ENCODE measurements at regions of chr1 and their contacts with region 1.

Region 1: GRCh38 chr1:220294846-220295301 is 22.6 kb upstream of the RAB3GAP2 start:
- DNase-seq: no peak
- ATAC-seq: no peak
- H3K4me3 ChIP-seq: no peak overlapping the region
- H3K4me3 Mint-ChIP-seq: no peak overlapping the region
- H3K27ac ChIP-seq: no peak overlapping the region
- H3K27ac Mint-ChIP-seq: no peak overlapping the region
- H3K4me1 ChIP-seq: no peaks in the 10 kb centered on the region
- H3K4me1 Mint-ChIP-seq: no peaks in the 10 kb centered on the region
- H3K27me3 ChIP-seq: peaks cover 0 to 12% (median 1%) of the 10 kb centered on the region in 4 experiments
- H3K27me3 Mint-ChIP-seq: peaks cover 12% of the 10 kb centered on the region
- CTCF ChIP-seq: no peak

Region 2: GRCh38 chr1:220189750-220190347 is 105.0 kb before region 1 on chr1:
- CTCF ChIA-PET with region 1: interaction called, 12 read pairs
- POLR2A ChIA-PET with region 1: no interaction called
- intact Hi-C with region 1: no loop called
- DNase-seq: peak; percentile 19
- ATAC-seq: no peak
- H3K4me3 ChIP-seq: no peak overlapping the region
- H3K4me3 Mint-ChIP-seq: no peak overlapping the region
- H3K27ac ChIP-seq: no peak overlapping the region
- H3K27ac Mint-ChIP-seq: no peak overlapping the region
- H3K4me1 ChIP-seq: no peaks in the 10 kb centered on the region
- H3K4me1 Mint-ChIP-seq: no peaks in the 10 kb centered on the region
- H3K27me3 ChIP-seq: no peaks in the 10 kb centered on the region
- H3K27me3 Mint-ChIP-seq: no peaks in the 10 kb centered on the region
- CTCF ChIP-seq: peak; percentile 71

Region 3: DNA sequence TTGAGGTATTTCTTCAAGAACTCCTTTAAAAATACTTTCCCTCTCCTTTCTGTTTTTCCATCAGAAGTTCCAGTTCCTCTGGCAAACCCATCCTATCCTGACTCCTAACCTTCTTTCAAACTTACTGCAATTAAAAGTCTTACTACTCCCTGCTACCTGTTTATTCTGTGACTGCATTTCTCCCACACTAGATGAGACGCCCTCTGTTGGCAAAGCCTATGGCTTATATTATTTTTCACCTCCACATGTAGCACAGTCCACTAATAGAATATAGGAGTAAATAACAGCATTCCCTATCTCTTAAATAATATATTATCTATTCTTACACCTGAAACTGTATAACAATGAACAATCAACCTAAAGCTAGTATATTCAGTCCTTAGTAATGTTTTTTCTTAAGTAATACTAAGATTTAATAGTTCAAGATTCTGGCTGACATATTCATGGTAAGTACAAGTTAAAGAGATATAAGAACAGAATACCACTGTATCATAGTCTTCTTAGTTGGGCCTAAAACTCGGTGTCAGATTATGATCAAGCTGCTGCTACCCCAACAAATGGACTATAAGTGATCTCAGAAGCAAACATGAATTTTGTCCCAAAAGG is 77.4 kb before region 1 on chr1:
- CTCF ChIA-PET with region 1: interaction called, 34 read pairs
- POLR2A ChIA-PET with region 1: no interaction called
- intact Hi-C with region 1: no loop called
- DNase-seq: peak; percentile 29
- ATAC-seq: no peak
- H3K4me3 ChIP-seq: no peak overlapping the region
- H3K4me3 Mint-ChIP-seq: no peak overlapping the region
- H3K27ac ChIP-seq: no peak overlapping the region
- H3K27ac Mint-ChIP-seq: peak overlapping the region; percentile 3
- H3K4me1 ChIP-seq: peaks cover 18 to 31% of the 10 kb centered on the region in 2 donors
- H3K4me1 Mint-ChIP-seq: peaks cover 48% of the 10 kb centered on the region
- H3K27me3 ChIP-seq: no peaks in the 10 kb centered on the region
- H3K27me3 Mint-ChIP-seq: no peaks in the 10 kb centered on the region
- CTCF ChIP-seq: peak; percentile 61

Measured in B cell (primary cell).